BJ (cell line): ENCODE measurements at regions of chr1 and their contacts with region 1.

Region 1: GRCh38 chr1:223748773-223749733 is 36.7 kb downstream of the CAPN2 start:
- DNase-seq: no peak
- H3K4me3 ChIP-seq: peak overlapping the region; percentile 12; the same call in 1 of the 2 replicates
- H3K27me3 ChIP-seq: no peaks in the 10 kb centered on the region
- CTCF ChIP-seq: peak; percentile 78

Region 2: GRCh38 chr1:223700942-223701637 is 48.0 kb before region 1 on chr1:
- CTCF ChIA-PET with region 1: interaction called, 51 read pairs
- POLR2A ChIA-PET with region 1: no interaction called
- DNase-seq: peak; percentile 92
- H3K4me3 ChIP-seq: no peak overlapping the region
- H3K27me3 ChIP-seq: no peaks in the 10 kb centered on the region
- CTCF ChIP-seq: no peak

Region 3: DNA sequence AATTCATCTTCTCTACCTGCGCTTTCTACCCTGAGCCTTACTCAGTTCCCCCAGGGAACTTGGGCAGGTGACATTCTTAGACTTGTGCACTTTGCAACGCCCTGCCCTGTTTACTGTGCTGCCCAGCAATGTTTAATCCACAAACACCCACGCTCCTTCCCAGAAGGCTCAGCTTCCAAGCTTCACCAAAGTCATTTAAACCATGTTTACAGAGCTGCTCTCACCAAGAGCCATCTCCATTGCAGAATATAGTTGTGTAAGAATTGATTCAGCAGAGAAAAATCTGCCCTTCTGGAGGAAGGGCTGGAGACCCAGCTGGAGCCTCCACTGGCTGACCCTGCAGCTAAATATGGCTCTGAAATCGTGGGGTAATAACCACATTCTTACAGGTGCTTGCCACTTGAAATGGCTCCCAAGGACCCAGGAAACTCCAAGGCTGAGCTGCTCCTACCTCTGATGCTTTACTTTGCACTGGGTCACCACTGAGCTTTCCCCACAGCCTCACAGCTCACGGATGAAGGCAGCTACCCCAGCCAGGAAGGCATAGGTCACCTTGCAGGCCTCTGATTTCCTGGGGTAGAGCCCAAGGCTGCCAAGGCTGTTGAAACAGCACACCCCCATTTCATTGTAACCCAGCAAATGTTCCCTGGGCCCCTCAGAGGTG is 28.0 kb before region 1 on chr1:
- CTCF ChIA-PET with region 1: interaction called, 19 read pairs
- POLR2A ChIA-PET with region 1: no interaction called
- DNase-seq: peak; percentile 89
- H3K4me3 ChIP-seq: no peak overlapping the region
- H3K27me3 ChIP-seq: no peaks in the 10 kb centered on the region
- CTCF ChIP-seq: no peak

Region 4: DNA sequence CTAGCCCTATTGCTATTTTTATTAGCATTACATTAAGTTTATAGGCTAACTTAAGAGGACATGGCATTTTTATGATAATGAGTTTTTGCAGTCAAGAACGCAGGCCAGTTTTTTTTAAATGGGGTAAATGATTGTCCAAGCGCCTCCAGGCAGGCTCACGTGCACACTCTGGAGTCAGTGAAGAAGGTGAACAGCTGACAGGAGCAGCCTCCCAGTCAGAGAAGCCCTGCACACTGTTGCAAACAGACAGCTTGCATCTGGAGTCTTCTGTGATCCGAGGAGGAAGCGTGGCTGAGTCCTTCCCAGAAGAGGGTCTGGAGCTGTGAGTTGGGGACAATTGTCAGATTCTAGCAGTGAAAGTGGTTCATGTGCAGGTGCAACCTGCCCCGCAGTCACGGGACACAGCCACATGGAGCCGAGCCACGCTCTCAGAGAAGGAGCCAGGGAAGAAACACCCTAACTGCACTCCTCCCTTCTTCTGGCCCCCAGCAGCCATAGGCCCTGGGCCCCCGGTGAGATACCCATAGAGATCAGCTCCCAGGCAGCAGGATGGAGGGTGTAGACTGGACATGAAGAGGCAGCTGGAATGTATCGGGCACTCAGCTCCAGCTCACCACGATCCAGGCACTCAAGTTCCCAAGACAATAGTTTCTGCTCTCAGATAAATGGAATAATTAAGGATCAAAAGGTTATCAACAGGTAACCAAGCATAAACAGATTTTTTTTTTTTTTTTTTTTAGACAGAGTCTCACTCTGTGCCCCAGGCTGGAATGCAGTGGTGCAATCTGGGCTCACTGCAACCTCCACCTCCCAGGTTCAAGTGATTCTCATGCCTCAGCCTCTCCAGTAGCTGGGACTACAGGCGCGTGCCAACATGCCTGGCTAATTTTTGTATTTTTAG is 10.3 kb before region 1 on chr1:
- CTCF ChIA-PET with region 1: interaction called, 28 read pairs
- POLR2A ChIA-PET with region 1: no interaction called
- DNase-seq: no peak
- H3K4me3 ChIP-seq: no peak overlapping the region
- H3K27me3 ChIP-seq: no peaks in the 10 kb centered on the region
- CTCF ChIP-seq: no peak

Region 5: GRCh38 chr1:223819730-223820514 is 70.9 kb after region 1 on chr1:
- CTCF ChIA-PET with region 1: no interaction called
- POLR2A ChIA-PET with region 1: no interaction called
- DNase-seq: no peak
- H3K4me3 ChIP-seq: no peak overlapping the region
- H3K27me3 ChIP-seq: no peaks in the 10 kb centered on the region
- CTCF ChIP-seq: no peak

Region 6: GRCh38 chr1:223860051-223860622 is 111.1 kb after region 1 on chr1:
- CTCF ChIA-PET with region 1: no interaction called
- POLR2A ChIA-PET with region 1: no interaction called
- DNase-seq: no peak
- H3K4me3 ChIP-seq: no peak overlapping the region
- H3K27me3 ChIP-seq: 0 out of 2 replicates have a peak, but pooled peaks cover 1% of the 10 kb centered on the region
- CTCF ChIP-seq: no peak